ENCODE measurements at regions of chr16 and their contacts with region 1.

Region 1: GRCh38 chr16:3400779-3401688 is at the starts of genes ZNF174 and ZSCAN32:
- DNase-seq: peak; percentile 99
- ATAC-seq: peak; percentile 97
- H3K4me3 ChIP-seq: peak within 1 kb of the TSS; percentile 59 to 84 (median 76)
- H3K4me3 Mint-ChIP-seq: peak within 1 kb of the TSS; percentile 98
- H3K27ac ChIP-seq: peak within 1 kb of the TSS; percentile 13 to 80
- H3K27ac Mint-ChIP-seq: peak within 1 kb of the TSS; percentile 97
- H3K4me1 ChIP-seq: peaks cover 11 to 23% of the 10 kb centered on the region in 2 donors
- H3K4me1 Mint-ChIP-seq: peaks cover 50% of the 10 kb centered on the region
- H3K27me3 ChIP-seq: no peaks in the 10 kb centered on the region
- H3K27me3 Mint-ChIP-seq: no peaks in the 10 kb centered on the region
- CTCF ChIP-seq: no peak
- total RNA-seq, gene ZNF174: 12.7 and 13.3 TPM in 2 replicates
- total RNA-seq, gene ZSCAN32: 25.9 and 26.9 TPM in 2 replicates

Region 2: GRCh38 chr16:3198334-3199072 is 202.5 kb before region 1 on chr16:
- CTCF ChIA-PET with region 1: no interaction called
- POLR2A ChIA-PET with region 1: no interaction called
- intact Hi-C with region 1: no loop called
- DNase-seq: no peak
- ATAC-seq: no peak
- H3K4me3 ChIP-seq: no peak overlapping the region
- H3K4me3 Mint-ChIP-seq: no peak overlapping the region
- H3K27ac ChIP-seq: no peak overlapping the region
- H3K27ac Mint-ChIP-seq: no peak overlapping the region
- H3K4me1 ChIP-seq: no peaks in the 10 kb centered on the region
- H3K4me1 Mint-ChIP-seq: no peaks in the 10 kb centered on the region
- H3K27me3 ChIP-seq: peaks cover 0 to 36% (median 17%) of the 10 kb centered on the region in 4 experiments
- H3K27me3 Mint-ChIP-seq: peaks cover 50% of the 10 kb centered on the region
- CTCF ChIP-seq: no peak

Region 3: GRCh38 chr16:3264137-3265036 is 136.6 kb before region 1 on chr16:
- CTCF ChIA-PET with region 1: no interaction called
- POLR2A ChIA-PET with region 1: interaction called, 9 read pairs
- intact Hi-C with region 1: loop called (anchors 1 kb)
- DNase-seq: peak; percentile 97
- ATAC-seq: peak; percentile 86
- H3K4me3 ChIP-seq: peak overlapping the region; percentile 75 to 84 (median 78)
- H3K4me3 Mint-ChIP-seq: peak overlapping the region; percentile 92
- H3K27ac ChIP-seq: peak overlapping the region; percentile 85 to 86
- H3K27ac Mint-ChIP-seq: peak overlapping the region; percentile 95
- H3K4me1 ChIP-seq: peaks cover 9 to 18% of the 10 kb centered on the region in 2 donors
- H3K4me1 Mint-ChIP-seq: peaks cover 28% of the 10 kb centered on the region
- H3K27me3 ChIP-seq: no peaks in the 10 kb centered on the region
- H3K27me3 Mint-ChIP-seq: no peaks in the 10 kb centered on the region
- CTCF ChIP-seq: peak; percentile 54

Region 4: GRCh38 chr16:3305109-3306068 is 95.6 kb before region 1 on chr16 and contains the starts of genes TIGD7 and ZNF75A:
- CTCF ChIA-PET with region 1: no interaction called
- POLR2A ChIA-PET with region 1: no interaction called
- intact Hi-C with region 1: loop called (anchors 1 kb)
- DNase-seq: peak; percentile 94
- ATAC-seq: peak; percentile 89
- H3K4me3 ChIP-seq: peak within 1 kb of the TSS; percentile 71 to 86 (median 78)
- H3K4me3 Mint-ChIP-seq: peak within 1 kb of the TSS; percentile 88
- H3K27ac ChIP-seq: peak within 1 kb of the TSS; percentile 82 to 93
- H3K27ac Mint-ChIP-seq: peak within 1 kb of the TSS; percentile 89
- H3K4me1 ChIP-seq: peaks cover 8 to 14% of the 10 kb centered on the region in 2 donors
- H3K4me1 Mint-ChIP-seq: peaks cover 21% of the 10 kb centered on the region
- H3K27me3 ChIP-seq: no peaks in the 10 kb centered on the region
- H3K27me3 Mint-ChIP-seq: no peaks in the 10 kb centered on the region
- CTCF ChIP-seq: no peak
- total RNA-seq, gene TIGD7: 12.8 and 15.7 TPM in 2 replicates
- total RNA-seq, gene ZNF75A: 111 and 118 TPM in 2 replicates

Region 5: DNA sequence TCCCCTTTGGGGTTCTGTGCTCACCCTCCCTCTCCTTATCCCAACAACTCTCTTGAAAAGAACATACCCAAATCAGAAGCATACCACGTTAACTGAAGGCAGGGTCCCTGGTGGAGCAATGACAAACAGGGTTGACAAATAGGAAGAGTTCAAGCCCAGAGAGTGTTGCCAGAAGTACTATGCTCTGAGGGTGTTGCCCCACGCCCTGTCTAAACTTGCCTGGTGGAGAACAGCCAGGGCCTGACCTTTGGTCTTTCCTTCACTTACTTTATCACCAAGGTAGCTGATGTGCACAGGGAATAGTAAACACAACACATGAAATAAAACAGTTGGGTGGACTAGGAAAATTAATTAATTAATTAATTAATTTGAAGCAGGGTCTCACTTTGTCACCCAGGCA is 72.4 kb before region 1 on chr16:
- CTCF ChIA-PET with region 1: no interaction called
- POLR2A ChIA-PET with region 1: no interaction called
- intact Hi-C with region 1: no loop called
- DNase-seq: no peak
- ATAC-seq: no peak
- H3K4me3 ChIP-seq: no peak overlapping the region
- H3K4me3 Mint-ChIP-seq: no peak overlapping the region
- H3K27ac ChIP-seq: no peak overlapping the region
- H3K27ac Mint-ChIP-seq: no peak overlapping the region
- H3K4me1 ChIP-seq: no peaks in the 10 kb centered on the region
- H3K4me1 Mint-ChIP-seq: no peaks in the 10 kb centered on the region
- H3K27me3 ChIP-seq: no peaks in the 10 kb centered on the region
- H3K27me3 Mint-ChIP-seq: no peaks in the 10 kb centered on the region
- CTCF ChIP-seq: no peak

Region 6: GRCh38 chr16:3383045-3383448 is 18.0 kb before region 1 on chr16:
- CTCF ChIA-PET with region 1: no interaction called
- POLR2A ChIA-PET with region 1: no interaction called
- intact Hi-C with region 1: no loop called
- DNase-seq: no peak
- ATAC-seq: no peak
- H3K4me3 ChIP-seq: no peak overlapping the region
- H3K4me3 Mint-ChIP-seq: no peak overlapping the region
- H3K27ac ChIP-seq: no peak overlapping the region
- H3K27ac Mint-ChIP-seq: no peak overlapping the region
- H3K4me1 ChIP-seq: no peaks in the 10 kb centered on the region
- H3K4me1 Mint-ChIP-seq: no peaks in the 10 kb centered on the region
- H3K27me3 ChIP-seq: no peaks in the 10 kb centered on the region
- H3K27me3 Mint-ChIP-seq: no peaks in the 10 kb centered on the region
- CTCF ChIP-seq: no peak

Region 7: DNA sequence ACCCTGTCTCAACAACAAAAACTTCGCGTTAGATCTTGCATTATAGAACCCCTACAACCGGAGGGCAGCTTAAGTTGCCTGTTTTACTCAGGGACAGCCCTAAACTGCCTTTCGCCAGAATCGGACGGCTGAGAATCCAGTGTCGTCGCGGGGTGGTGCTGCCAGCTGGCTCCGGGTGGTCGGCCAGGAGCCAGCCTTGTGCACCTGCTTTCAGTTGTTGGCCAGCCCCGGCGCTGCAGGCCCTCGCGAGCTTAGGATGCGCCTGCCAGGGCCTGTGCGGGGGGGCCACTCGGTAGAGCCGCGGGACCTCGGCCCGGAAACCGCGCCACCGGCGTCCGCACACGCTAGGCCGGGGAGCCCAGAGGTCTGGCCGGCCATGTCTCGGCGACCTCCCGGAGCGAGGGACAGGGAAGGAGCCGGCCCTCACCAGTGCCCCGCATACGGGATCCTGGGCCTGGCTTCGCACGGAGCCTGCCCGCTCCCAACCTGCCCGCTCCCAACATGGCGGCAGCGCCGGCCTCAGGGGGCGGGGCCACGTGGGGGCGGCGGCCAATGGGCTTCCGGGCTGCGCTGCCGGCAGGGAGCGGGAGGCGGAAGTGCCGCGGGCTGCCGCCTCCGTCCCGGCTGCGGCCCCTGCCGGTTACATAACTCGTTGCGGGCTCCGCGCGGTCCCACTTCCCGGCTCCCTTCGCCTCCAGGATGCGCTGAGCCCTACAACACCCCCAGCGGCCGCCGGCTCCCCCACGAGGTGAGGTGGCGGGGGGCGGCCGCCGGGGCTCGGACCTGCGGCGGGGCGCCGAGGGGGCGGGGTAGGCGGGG is 56.6 kb after region 1 on chr16:
- CTCF ChIA-PET with region 1: interaction called, 7 read pairs
- POLR2A ChIA-PET with region 1: interaction called, 12 read pairs
- intact Hi-C with region 1: loop called (anchors 1 kb)
- DNase-seq: peak; percentile 96
- ATAC-seq: peak; percentile 94
- H3K4me3 ChIP-seq: peak overlapping the region; percentile 48 to 86 (median 73)
- H3K4me3 Mint-ChIP-seq: peak overlapping the region; percentile 84
- H3K27ac ChIP-seq: peak overlapping the region; percentile 87 to 95
- H3K27ac Mint-ChIP-seq: peak overlapping the region; percentile 90
- H3K4me1 ChIP-seq: peaks cover 28 to 39% of the 10 kb centered on the region in 2 donors
- H3K4me1 Mint-ChIP-seq: peaks cover 50% of the 10 kb centered on the region
- H3K27me3 ChIP-seq: no peaks in the 10 kb centered on the region
- H3K27me3 Mint-ChIP-seq: no peaks in the 10 kb centered on the region
- CTCF ChIP-seq: peak; percentile 63

Region 8: GRCh38 chr16:3829631-3830536 is 428.9 kb after region 1 on chr16:
- CTCF ChIA-PET with region 1: no interaction called
- POLR2A ChIA-PET with region 1: no interaction called
- intact Hi-C with region 1: no loop called
- DNase-seq: no peak
- ATAC-seq: no peak
- H3K4me3 ChIP-seq: no peak overlapping the region
- H3K4me3 Mint-ChIP-seq: no peak overlapping the region
- H3K27ac ChIP-seq: no peak overlapping the region
- H3K27ac Mint-ChIP-seq: no peak overlapping the region
- H3K4me1 ChIP-seq: no peaks in the 10 kb centered on the region
- H3K4me1 Mint-ChIP-seq: peaks cover 48% of the 10 kb centered on the region
- H3K27me3 ChIP-seq: no peaks in the 10 kb centered on the region
- H3K27me3 Mint-ChIP-seq: no peaks in the 10 kb centered on the region
- CTCF ChIP-seq: no peak